CD14-positive monocyte (primary cell): ENCODE measurements at regions of chr12 and their contacts with region 1.

Region 1: GRCh38 chr12:54279866-54280467 is at the start of gene CBX5:
- DNase-seq: peak; percentile 98 to 99 (median 98)
- H3K4me3 ChIP-seq: peak within 1 kb of the TSS; percentile 80 to 95 (median 80)
- H3K4me3 Mint-ChIP-seq: no peak within 1 kb of the TSS
- H3K27ac ChIP-seq: peak within 1 kb of the TSS; percentile 89 to 92
- H3K27ac Mint-ChIP-seq: no peak within 1 kb of the TSS
- H3K4me1 ChIP-seq: peaks cover 63 to 71% of the 10 kb centered on the region in 2 donors
- H3K4me1 Mint-ChIP-seq: peaks cover 45% of the 10 kb centered on the region
- H3K27me3 ChIP-seq: no peaks in the 10 kb centered on the region
- H3K27me3 Mint-ChIP-seq: peaks cover 0 to 1% (median 0%) of the 10 kb centered on the region in 3 donors
- CTCF ChIP-seq: no peak
- polyA plus RNA-seq, gene CBX5: 2.9 to 5.4 (median 4.8) TPM

Region 2: DNA sequence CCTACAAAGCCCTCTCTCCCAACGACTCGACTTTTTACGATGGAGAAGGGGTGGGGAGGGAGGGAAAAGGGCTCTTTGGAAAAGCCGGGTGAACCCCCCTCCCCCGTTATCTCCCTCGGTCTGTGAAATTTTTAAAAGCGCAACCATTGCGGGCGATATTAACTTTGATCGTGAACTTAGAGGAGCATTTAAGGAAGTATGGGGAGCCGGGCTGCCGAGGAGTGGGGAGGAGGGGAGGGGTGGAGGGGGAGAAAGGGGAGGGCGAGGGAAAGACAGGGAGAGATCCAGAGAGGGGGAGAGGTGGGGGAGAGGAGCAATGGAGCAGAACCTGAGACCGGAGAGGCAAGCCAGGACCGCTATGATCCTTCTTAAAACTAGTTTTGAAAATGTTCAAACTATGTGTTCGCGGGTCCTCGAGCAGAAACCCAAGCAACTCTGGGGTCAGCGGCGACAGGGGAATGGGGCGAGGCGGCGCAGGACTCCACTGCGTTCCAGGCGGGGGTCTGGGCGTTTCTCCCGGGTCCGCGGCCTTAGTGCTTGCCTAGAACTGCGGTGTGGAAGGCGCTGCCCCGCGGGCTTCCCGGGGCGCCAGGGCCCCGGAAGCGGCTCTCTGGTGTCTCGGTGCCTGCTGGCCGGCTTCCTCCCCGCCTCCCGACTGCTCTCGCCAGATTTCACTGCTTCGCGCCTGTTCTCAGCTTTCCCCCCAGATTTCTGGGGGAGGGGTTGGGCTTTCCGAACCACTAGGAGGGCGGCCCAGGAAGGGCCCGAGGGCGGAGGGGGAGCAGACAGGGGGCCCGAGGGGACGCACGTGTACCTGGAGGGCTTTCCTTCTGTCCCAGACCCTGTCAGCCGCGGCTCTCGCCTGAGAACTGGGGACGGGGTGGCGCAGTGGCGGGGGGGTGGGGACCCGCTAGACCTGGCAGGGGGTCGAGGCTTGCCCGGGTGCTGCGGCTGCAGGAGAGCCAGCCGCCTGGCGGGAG is 305.6 kb before region 1 on chr12 and contains the start of gene HOTAIR:
- intact Hi-C with region 1: no loop called
- DNase-seq: peak in 2 of 3 donors; percentile 23 to 39
- H3K4me3 ChIP-seq: peak within 1 kb of the TSS; percentile 32 to 71 (median 35)
- H3K4me3 Mint-ChIP-seq: peak within 1 kb of the TSS; percentile 67 to 86
- H3K27ac ChIP-seq: no peak within 1 kb of the TSS
- H3K27ac Mint-ChIP-seq: peak within 1 kb of the TSS in 2 of 7 donors; percentile 38 to 63
- H3K4me1 ChIP-seq: peaks cover 10 to 23% of the 10 kb centered on the region in 2 donors
- H3K4me1 Mint-ChIP-seq: peaks cover 27% of the 10 kb centered on the region
- H3K27me3 ChIP-seq: peaks cover 99 to 100% of the 10 kb centered on the region in 2 donors
- H3K27me3 Mint-ChIP-seq: peaks cover 96 to 100% (median 99%) of the 10 kb centered on the region in 3 donors
- CTCF ChIP-seq: no peak
- polyA plus RNA-seq, gene HOTAIR: not detected

Region 3: GRCh38 chr12:54216797-54217661 is 62.9 kb before region 1 on chr12:
- intact Hi-C with region 1: no loop called
- DNase-seq: peak; percentile 58 to 76 (median 70)
- H3K4me3 ChIP-seq: peak overlapping the region in 2 of 3 experiments; percentile 20 to 67
- H3K4me3 Mint-ChIP-seq: peak overlapping the region; percentile 57 to 87
- H3K27ac ChIP-seq: no peak overlapping the region
- H3K27ac Mint-ChIP-seq: peak overlapping the region in 6 of 7 donors; percentile 33 to 75 (median 48)
- H3K4me1 ChIP-seq: peaks cover 32 to 38% of the 10 kb centered on the region in 2 donors
- H3K4me1 Mint-ChIP-seq: peaks cover 37% of the 10 kb centered on the region
- H3K27me3 ChIP-seq: peaks cover 8 to 49% of the 10 kb centered on the region in 2 donors
- H3K27me3 Mint-ChIP-seq: peaks cover 51 to 61% (median 60%) of the 10 kb centered on the region in 3 donors
- CTCF ChIP-seq: peak; percentile 79

Region 4: DNA sequence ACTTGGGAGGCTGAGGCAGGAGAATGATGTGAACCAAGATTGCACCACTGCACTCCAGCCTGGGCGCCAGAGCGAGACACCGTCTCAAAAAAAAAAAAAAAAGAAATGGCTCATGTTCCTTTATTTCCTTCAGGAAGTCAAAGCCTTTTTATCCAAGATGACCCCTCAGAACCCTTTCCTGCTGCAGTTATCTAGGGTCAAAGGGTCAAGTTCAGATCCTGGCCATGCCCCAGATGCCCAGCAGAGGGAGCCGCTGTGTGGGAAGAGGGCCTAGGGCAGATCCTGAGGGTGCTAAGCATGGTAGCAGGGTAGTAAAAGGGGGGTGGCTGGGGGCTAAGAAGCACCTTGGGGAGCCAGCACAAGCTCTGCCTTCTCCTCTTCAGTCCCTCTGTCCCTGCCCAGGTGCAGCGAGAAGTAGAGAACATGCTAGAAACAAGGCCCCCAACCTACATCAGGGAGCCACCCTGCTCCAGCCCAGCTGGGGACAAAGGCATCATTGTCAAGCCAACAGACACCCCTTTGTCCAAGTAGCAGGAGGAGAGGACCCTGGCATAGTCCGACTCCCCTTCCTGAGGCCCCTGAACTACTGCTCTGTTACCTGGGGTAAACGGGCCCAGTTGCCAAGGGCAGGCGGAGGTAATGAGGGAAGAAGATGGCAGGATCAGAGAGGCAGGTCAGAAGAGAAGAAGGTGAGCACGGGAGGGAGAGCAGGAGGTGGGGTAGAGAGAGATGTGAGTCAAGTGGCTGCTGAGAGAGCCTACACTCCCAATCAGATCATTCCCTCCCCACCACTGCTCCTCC is 14.4 kb after region 1 on chr12:
- intact Hi-C with region 1: loop called in 1 of 2 experiments (anchors 2 kb)
- DNase-seq: peak; percentile 63 to 75 (median 73)
- H3K4me3 ChIP-seq: peak overlapping the region in 1 of 3 experiments; percentile 99
- H3K4me3 Mint-ChIP-seq: peak overlapping the region; percentile 74 to 99
- H3K27ac ChIP-seq: peak overlapping the region; percentile 51 to 87
- H3K27ac Mint-ChIP-seq: peak overlapping the region; percentile 85 to 92 (median 88)
- H3K4me1 ChIP-seq: peaks cover 95 to 100% of the 10 kb centered on the region in 2 donors
- H3K4me1 Mint-ChIP-seq: peaks cover 89% of the 10 kb centered on the region
- H3K27me3 ChIP-seq: no peaks in the 10 kb centered on the region
- H3K27me3 Mint-ChIP-seq: no peaks in the 10 kb centered on the region
- CTCF ChIP-seq: peak; percentile 94

Region 5: GRCh38 chr12:54324617-54325441 is 44.9 kb after region 1 on chr12 and contains the start of gene COPZ1:
- intact Hi-C with region 1: loop called in 1 of 2 experiments (anchors 10 kb)
- DNase-seq: peak; percentile 98 to 99 (median 99)
- H3K4me3 ChIP-seq: peak within 1 kb of the TSS; percentile 50 to 96 (median 79)
- H3K4me3 Mint-ChIP-seq: peak within 1 kb of the TSS; percentile 95 to 99
- H3K27ac ChIP-seq: peak within 1 kb of the TSS; percentile 67 to 86
- H3K27ac Mint-ChIP-seq: peak within 1 kb of the TSS; percentile 98 to 99 (median 99)
- H3K4me1 ChIP-seq: peaks cover 49 to 68% of the 10 kb centered on the region in 2 donors
- H3K4me1 Mint-ChIP-seq: peaks cover 57% of the 10 kb centered on the region
- H3K27me3 ChIP-seq: no peaks in the 10 kb centered on the region
- H3K27me3 Mint-ChIP-seq: no peaks in the 10 kb centered on the region
- CTCF ChIP-seq: peak; percentile 87
- polyA plus RNA-seq, gene COPZ1: 78.9 to 190 (median 176) TPM